Spleen (tissue), 13 donors: ENCODE measurements at regions of chr13 and their contacts with region 1.

Region 1: DNA sequence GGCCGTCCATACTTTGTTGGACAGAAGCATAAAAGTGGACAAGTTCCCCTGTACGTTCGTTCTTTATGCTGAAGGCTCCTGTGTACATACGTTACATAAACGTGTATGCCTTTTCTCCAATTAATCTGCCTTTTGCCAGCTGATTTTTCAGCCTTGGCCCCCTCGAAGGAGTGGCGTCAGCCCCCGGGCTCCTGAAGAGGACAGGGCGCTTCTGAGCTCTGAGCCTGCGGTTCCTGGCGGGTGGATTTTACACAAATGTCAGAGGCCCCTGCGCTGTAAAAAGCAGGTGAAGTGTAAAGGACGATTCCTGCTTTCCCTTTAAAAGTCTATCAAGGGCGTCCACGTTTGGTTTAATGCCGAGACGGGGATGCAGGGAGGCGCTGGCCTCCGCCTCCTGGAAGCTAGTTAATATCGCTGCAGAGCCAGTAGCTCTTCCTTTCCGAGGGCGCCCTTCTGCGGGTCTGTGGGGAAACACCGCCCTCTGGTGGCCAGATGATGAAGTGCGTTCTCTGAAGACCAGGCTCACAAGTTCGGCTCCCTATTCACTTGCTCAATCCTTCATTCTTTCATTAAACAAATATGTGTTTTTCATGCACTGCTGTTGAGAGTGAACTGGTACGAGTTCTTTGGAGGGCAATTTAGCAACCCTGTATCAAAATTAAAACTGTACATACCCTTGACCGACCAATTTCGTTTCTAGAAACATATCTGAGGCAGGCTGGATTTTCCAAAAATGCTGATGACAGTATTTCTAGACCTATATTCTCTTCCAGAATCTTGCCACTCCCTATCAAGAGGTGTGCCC is 62.0 kb downstream of the GPR12 start:
- DNase-seq: peak; percentile 92
- H3K4me3 ChIP-seq: peak overlapping the region in 2 of 8 donors; percentile 12 to 49
- H3K27ac ChIP-seq: no peak overlapping the region
- H3K4me1 ChIP-seq: peaks cover 0 to 7% (median 6%) of the 10 kb centered on the region in 6 donors
- H3K27me3 ChIP-seq: no peaks in the 10 kb centered on the region
- CTCF ChIP-seq: peak; percentile 83 to 97 (median 92)
- POLR2A ChIP-seq: no peak

Region 2: GRCh38 chr13:26184791-26185250 is 513.8 kb before region 1 on chr13:
- intact Hi-C with region 1: loop called (anchors 5 kb)
- DNase-seq: peak; percentile 81
- H3K4me3 ChIP-seq: no peak overlapping the region
- H3K27ac ChIP-seq: peak overlapping the region in 2 of 8 donors; percentile 89 to 90
- H3K4me1 ChIP-seq: peaks cover 12 to 39% (median 28%) of the 10 kb centered on the region in 6 donors
- H3K27me3 ChIP-seq: no peaks in the 10 kb centered on the region
- CTCF ChIP-seq: peak; percentile 70 to 94 (median 84)
- POLR2A ChIP-seq: no peak

Region 3: DNA sequence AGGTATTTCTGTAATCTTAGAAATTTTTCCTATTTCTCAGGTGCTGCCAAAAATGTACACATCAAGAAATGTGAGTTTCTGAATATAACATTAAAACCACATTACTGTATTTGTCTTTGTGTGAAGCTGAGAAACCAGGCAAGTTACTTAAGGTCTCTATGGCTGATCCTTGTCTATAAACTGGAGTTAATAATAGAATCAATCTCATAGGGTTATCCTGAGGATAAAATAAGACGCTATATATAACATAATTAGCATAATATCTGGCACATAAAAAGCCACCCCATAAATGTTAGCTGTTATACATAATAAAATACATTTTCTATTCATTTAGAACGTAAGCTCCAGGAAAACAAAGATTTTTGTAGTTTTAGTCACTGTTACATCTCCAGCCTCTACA is 482.6 kb before region 1 on chr13:
- intact Hi-C with region 1: no loop called
- DNase-seq: no peak
- H3K4me3 ChIP-seq: no peak overlapping the region
- H3K27ac ChIP-seq: no peak overlapping the region
- H3K4me1 ChIP-seq: peaks cover 10 to 35% (median 22%) of the 10 kb centered on the region in 6 donors
- H3K27me3 ChIP-seq: no peaks in the 10 kb centered on the region
- CTCF ChIP-seq: no peak
- POLR2A ChIP-seq: no peak

Region 4: GRCh38 chr13:26482451-26483197 is 216.0 kb before region 1 on chr13:
- intact Hi-C with region 1: loop called (anchors 5 kb)
- DNase-seq: no peak
- H3K4me3 ChIP-seq: peak overlapping the region in 1 of 8 donors; percentile 41
- H3K27ac ChIP-seq: peak overlapping the region in 1 of 8 donors; percentile 34
- H3K4me1 ChIP-seq: peaks cover 0 to 14% (median 0%) of the 10 kb centered on the region in 6 donors
- H3K27me3 ChIP-seq: no peaks in the 10 kb centered on the region
- CTCF ChIP-seq: peak; percentile 65 to 90 (median 82)
- POLR2A ChIP-seq: no peak

Region 5: GRCh38 chr13:26653310-26653709 is 45.3 kb before region 1 on chr13:
- intact Hi-C with region 1: no loop called
- DNase-seq: no peak
- H3K4me3 ChIP-seq: no peak overlapping the region
- H3K27ac ChIP-seq: no peak overlapping the region
- H3K4me1 ChIP-seq: no peaks in the 10 kb centered on the region
- H3K27me3 ChIP-seq: peaks cover 0 to 2% (median 0%) of the 10 kb centered on the region in 7 donors
- CTCF ChIP-seq: no peak
- POLR2A ChIP-seq: no peak

Region 6: GRCh38 chr13:26872525-26873385 is 174.2 kb after region 1 on chr13:
- intact Hi-C with region 1: no loop called
- DNase-seq: peak; percentile 78
- H3K4me3 ChIP-seq: no peak overlapping the region
- H3K27ac ChIP-seq: no peak overlapping the region
- H3K4me1 ChIP-seq: no peaks in the 10 kb centered on the region
- H3K27me3 ChIP-seq: peaks cover 0 to 36% (median 5%) of the 10 kb centered on the region in 7 donors
- CTCF ChIP-seq: peak; percentile 8 to 73 (median 54)
- POLR2A ChIP-seq: no peak

Region 7: DNA sequence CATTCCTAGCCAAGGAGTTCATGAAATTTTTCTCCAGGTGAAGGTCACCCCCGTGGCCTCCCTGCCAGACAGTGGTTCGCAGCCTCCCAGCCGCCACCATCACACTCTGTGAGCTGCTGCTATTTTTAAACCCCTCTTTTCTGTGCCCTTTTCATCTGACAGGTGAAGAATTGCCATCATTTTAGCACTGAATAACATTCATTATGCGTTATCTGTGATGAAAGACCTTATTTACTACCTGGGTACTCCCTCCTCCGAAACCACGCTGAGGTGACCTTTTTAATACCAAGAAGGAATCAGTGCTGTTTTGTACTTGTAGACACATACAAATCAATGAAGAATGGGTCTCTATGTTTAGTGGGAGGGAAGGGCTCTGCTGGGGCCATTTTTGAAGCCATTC is 210.9 kb after region 1 on chr13:
- intact Hi-C with region 1: no loop called
- DNase-seq: no peak
- H3K4me3 ChIP-seq: no peak overlapping the region
- H3K27ac ChIP-seq: no peak overlapping the region
- H3K4me1 ChIP-seq: peaks cover 0 to under 1% (median 0%) of the 10 kb centered on the region in 6 donors
- H3K27me3 ChIP-seq: peaks cover 0 to 36% (median 0%) of the 10 kb centered on the region in 7 donors
- CTCF ChIP-seq: no peak
- POLR2A ChIP-seq: no peak